CD4-positive, alpha-beta memory T cell (primary cell): ENCODE measurements at regions of chr13 and their contacts with region 1.

Region 1: DNA sequence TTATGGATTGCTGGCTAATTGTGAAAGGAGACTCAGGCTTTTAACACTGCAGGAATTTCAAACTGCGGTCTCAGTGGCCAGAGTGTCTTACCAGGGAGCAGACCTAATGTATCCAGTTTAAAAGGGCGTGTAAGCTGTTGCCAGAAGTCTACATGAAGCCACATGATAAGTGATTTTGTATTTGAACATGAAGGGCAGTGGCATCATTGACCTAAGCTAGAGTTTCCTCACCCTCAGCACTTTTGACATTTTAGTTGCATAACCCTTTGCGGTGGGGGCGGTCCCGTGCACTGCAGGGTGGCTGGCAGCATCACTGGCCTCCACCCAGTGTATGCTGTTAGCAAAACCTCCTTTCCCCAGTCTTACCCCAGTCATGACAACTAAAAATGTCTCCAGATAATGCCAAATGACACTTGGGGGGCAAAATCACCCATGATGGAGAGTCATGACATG is 23.7 kb upstream of the GPR18 start:
- DNase-seq: peak; percentile 65 to 79 (median 74)
- H3K4me3 ChIP-seq: peak overlapping the region in 1 of 2 donors; percentile 16
- H3K4me3 Mint-ChIP-seq: peak overlapping the region; percentile 67 to 92 (median 82)
- H3K27ac ChIP-seq: peak overlapping the region; percentile 66
- H3K27ac Mint-ChIP-seq: peak overlapping the region; percentile 88 to 100 (median 99)
- H3K4me1 ChIP-seq: peaks cover 96% of the 10 kb centered on the region
- H3K4me1 Mint-ChIP-seq: peaks cover 77 to 99% (median 88%) of the 10 kb centered on the region in 4 donors
- H3K27me3 ChIP-seq: no peaks in the 10 kb centered on the region
- H3K27me3 Mint-ChIP-seq: no peaks in the 10 kb centered on the region

Region 2: DNA sequence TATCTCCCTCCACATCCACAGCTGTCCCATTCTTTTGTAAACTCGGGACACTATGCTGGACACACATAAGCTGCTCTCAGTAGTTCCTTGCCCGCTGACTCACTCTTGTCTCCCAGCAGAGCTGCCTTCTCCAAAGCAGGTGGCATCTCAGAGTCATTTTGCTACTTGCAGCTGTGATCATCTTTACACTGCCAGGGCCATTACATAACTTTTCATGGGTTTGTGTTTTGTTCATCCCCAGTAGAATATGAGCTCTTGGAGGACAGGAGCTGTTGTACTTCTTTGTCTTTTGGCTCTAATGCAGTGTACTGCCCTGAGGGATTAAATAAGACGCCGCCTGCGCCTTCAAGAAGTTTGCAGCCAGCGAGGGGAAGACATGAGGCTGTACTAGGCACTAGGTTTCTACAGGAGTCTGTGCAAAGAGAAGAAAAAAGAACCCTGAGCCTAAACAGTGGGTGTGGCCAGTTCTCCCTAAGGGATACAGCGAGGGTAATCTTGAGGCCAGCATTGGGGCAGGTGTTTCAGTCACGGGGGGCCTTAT is 66.1 kb after region 1 on chr13:
- CTCF ChIA-PET with region 1: interaction called, 15 read pairs
- POLR2A ChIA-PET with region 1: interaction called, 95 read pairs
- intact Hi-C with region 1: no loop called
- DNase-seq: no peak
- H3K4me3 ChIP-seq: no peak overlapping the region
- H3K4me3 Mint-ChIP-seq: peak overlapping the region in 5 of 8 donors; percentile 30 to 66 (median 56)
- H3K27ac ChIP-seq: peak overlapping the region; percentile 9
- H3K27ac Mint-ChIP-seq: peak overlapping the region; percentile 79 to 99 (median 94)
- H3K4me1 ChIP-seq: peaks cover 84% of the 10 kb centered on the region
- H3K4me1 Mint-ChIP-seq: peaks cover 79 to 98% (median 88%) of the 10 kb centered on the region in 4 donors
- H3K27me3 ChIP-seq: no peaks in the 10 kb centered on the region
- H3K27me3 Mint-ChIP-seq: no peaks in the 10 kb centered on the region

Region 3: GRCh38 chr13:99606324-99607066 is 324.7 kb after region 1 on chr13:
- CTCF ChIA-PET with region 1: no interaction called
- POLR2A ChIA-PET with region 1: no interaction called
- intact Hi-C with region 1: loop called (anchors 10 kb)
- DNase-seq: peak; percentile 87 to 90 (median 89)
- H3K4me3 ChIP-seq: peak within 1 kb of the TSS; percentile 53 to 78
- H3K4me3 Mint-ChIP-seq: peak within 1 kb of the TSS; percentile 88 to 97 (median 90)
- H3K27ac ChIP-seq: peak within 1 kb of the TSS; percentile 71
- H3K27ac Mint-ChIP-seq: peak within 1 kb of the TSS; percentile 91 to 96 (median 95)
- H3K4me1 ChIP-seq: peaks cover 35% of the 10 kb centered on the region
- H3K4me1 Mint-ChIP-seq: peaks cover 28 to 59% (median 46%) of the 10 kb centered on the region in 4 donors
- H3K27me3 ChIP-seq: no peaks in the 10 kb centered on the region
- H3K27me3 Mint-ChIP-seq: no peaks in the 10 kb centered on the region